K562 (cell line): ENCODE measurements at regions of chr4 and their contacts with region 1.

Region 1: GRCh38 chr4:2878346-2878745 is 34.7 kb downstream of the ADD1 start:
- DNase-seq: no peak
- ATAC-seq: no peak
- H3K4me3 ChIP-seq: no peak overlapping the region
- H3K27ac ChIP-seq: no peak overlapping the region
- H3K4me1 ChIP-seq: no peaks in the 10 kb centered on the region
- H3K27me3 ChIP-seq: no peaks in the 10 kb centered on the region
- CTCF ChIP-seq: no peak
- EP300 ChIP-seq: no peak
- POLR2A ChIP-seq: no peak
- RAD21 ChIP-seq: no peak

Region 2: GRCh38 chr4:2867758-2868491 is 10.4 kb before region 1 on chr4:
- CTCF ChIA-PET with region 1: no interaction called
- POLR2A ChIA-PET with region 1: interaction called, 11 read pairs
- in situ Hi-C with region 1: no loop called
- intact Hi-C with region 1: no loop called
- DNase-seq: peak; percentile 64 to 86 (median 76)
- ATAC-seq: peak; percentile 93
- H3K4me3 ChIP-seq: no peak overlapping the region
- H3K27ac ChIP-seq: peak overlapping the region; percentile 11; the same call in 1 of the 3 replicates
- H3K4me1 ChIP-seq: peaks cover 22 to 46% of the 10 kb centered on the region in 2 experiments
- H3K27me3 ChIP-seq: no peaks in the 10 kb centered on the region
- CTCF ChIP-seq: no peak
- EP300 ChIP-seq: peak; percentile 72
- POLR2A ChIP-seq: no peak
- RAD21 ChIP-seq: peak in 1 of 2 experiments; percentile 10; a peak in 1 of 4 replicates